Activated B cell treated with CpG ODN at 0.5 μM for 24 hours (primary cell): ENCODE measurements at regions of chr12 and their contacts with region 1.

Region 1: DNA sequence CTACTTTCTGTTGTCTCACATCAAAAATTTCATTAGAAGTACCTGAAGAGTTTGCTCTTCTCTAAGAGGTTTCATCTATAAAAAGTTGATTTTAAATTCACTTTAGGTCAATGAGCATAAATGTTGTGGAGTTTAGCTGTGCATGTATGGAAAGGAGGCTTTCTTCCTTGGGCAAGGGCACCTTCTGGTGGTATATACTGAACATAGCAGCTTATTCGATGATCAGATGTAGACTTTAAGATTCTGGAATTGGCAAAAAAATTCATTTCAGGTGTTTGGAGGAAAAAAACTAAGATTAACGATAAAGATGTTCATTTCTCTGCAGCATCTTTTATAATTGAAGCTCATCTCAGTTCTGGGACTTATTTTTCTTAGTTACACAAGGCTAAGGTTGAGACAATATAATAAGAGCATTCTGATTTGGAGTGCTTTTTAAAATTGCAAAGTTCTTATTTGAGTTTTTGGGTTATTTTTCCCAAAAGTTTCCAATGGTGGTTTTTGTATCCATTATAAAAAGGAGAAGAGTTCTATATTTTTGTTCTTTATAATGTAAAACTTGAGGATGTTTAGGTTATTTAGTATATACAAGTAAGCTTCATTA is 46.8 kb downstream of the TMEM117 start:
- DNase-seq: no peak
- ATAC-seq: peak; percentile 75
- H3K4me3 Mint-ChIP-seq: no peak overlapping the region
- H3K27ac Mint-ChIP-seq: no peak overlapping the region
- H3K4me1 Mint-ChIP-seq: no peaks in the 10 kb centered on the region
- H3K27me3 Mint-ChIP-seq: no peaks in the 10 kb centered on the region
- CTCF ChIP-seq: peak; percentile 78

Region 2: GRCh38 chr12:43131304-43131703 is 751.4 kb before region 1 on chr12:
- CTCF ChIA-PET with region 1: no interaction called
- POLR2A ChIA-PET with region 1: no interaction called
- intact Hi-C with region 1: no loop called
- DNase-seq: no peak
- ATAC-seq: no peak
- H3K4me3 Mint-ChIP-seq: no peak overlapping the region
- H3K27ac Mint-ChIP-seq: no peak overlapping the region
- H3K4me1 Mint-ChIP-seq: no peaks in the 10 kb centered on the region
- H3K27me3 Mint-ChIP-seq: no peaks in the 10 kb centered on the region
- CTCF ChIP-seq: no peak

Region 3: DNA sequence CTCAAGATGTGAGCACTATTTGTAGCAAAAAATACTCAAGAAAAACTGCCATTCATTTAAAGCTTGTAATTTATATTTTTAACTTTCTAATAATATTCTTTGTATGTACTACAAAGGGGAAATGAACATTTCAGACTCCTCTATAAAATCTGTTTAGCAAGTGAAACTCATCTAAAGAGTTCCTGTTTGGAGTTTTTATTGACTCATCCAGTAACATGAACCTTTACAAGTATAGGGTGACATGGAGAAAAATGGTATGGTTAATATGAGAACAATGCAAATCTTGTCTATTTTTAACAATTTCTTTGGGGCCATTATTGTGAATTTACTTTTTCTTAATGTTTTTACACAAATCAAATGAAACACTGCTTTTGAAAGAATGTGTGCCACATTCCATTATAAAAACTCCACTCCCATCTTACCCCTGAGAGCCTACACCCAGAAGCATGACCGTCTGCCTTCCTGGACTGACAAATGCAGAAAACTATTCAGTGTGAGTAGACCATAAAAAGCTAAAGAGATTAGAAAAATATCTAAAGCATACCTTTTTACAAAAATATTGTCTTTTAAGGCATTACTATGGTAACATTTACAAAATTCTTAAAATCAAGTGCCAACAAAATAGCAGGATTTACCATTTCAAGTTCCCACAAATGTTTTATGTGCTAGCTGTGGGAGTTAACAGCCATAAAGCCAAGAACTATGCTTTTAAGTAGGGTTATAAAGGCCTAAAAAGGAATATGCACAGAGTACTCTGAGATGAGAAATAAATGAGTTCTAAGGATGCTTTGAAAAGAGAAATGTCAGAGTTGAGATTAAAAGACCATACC is 474.6 kb before region 1 on chr12:
- CTCF ChIA-PET with region 1: no interaction called
- POLR2A ChIA-PET with region 1: no interaction called
- intact Hi-C with region 1: no loop called
- DNase-seq: no peak
- ATAC-seq: no peak
- H3K4me3 Mint-ChIP-seq: no peak overlapping the region
- H3K27ac Mint-ChIP-seq: no peak overlapping the region
- H3K4me1 Mint-ChIP-seq: no peaks in the 10 kb centered on the region
- H3K27me3 Mint-ChIP-seq: no peaks in the 10 kb centered on the region
- CTCF ChIP-seq: no peak

Region 4: GRCh38 chr12:43444940-43445564 is 437.6 kb before region 1 on chr12:
- CTCF ChIA-PET with region 1: interaction called, 61 read pairs
- POLR2A ChIA-PET with region 1: interaction called, 6 read pairs
- intact Hi-C with region 1: loop called (anchors 1 kb)
- DNase-seq: no peak
- ATAC-seq: peak; percentile 47
- H3K4me3 Mint-ChIP-seq: no peak overlapping the region
- H3K27ac Mint-ChIP-seq: no peak overlapping the region
- H3K4me1 Mint-ChIP-seq: no peaks in the 10 kb centered on the region
- H3K27me3 Mint-ChIP-seq: peaks cover 3% of the 10 kb centered on the region
- CTCF ChIP-seq: no peak

Region 5: GRCh38 chr12:43501703-43502102 is 381.0 kb before region 1 on chr12:
- CTCF ChIA-PET with region 1: no interaction called
- POLR2A ChIA-PET with region 1: no interaction called
- intact Hi-C with region 1: loop called (anchors 5 kb)
- DNase-seq: no peak
- ATAC-seq: no peak
- H3K4me3 Mint-ChIP-seq: no peak overlapping the region
- H3K27ac Mint-ChIP-seq: no peak overlapping the region
- H3K4me1 Mint-ChIP-seq: no peaks in the 10 kb centered on the region
- H3K27me3 Mint-ChIP-seq: no peaks in the 10 kb centered on the region
- CTCF ChIP-seq: no peak

Region 6: DNA sequence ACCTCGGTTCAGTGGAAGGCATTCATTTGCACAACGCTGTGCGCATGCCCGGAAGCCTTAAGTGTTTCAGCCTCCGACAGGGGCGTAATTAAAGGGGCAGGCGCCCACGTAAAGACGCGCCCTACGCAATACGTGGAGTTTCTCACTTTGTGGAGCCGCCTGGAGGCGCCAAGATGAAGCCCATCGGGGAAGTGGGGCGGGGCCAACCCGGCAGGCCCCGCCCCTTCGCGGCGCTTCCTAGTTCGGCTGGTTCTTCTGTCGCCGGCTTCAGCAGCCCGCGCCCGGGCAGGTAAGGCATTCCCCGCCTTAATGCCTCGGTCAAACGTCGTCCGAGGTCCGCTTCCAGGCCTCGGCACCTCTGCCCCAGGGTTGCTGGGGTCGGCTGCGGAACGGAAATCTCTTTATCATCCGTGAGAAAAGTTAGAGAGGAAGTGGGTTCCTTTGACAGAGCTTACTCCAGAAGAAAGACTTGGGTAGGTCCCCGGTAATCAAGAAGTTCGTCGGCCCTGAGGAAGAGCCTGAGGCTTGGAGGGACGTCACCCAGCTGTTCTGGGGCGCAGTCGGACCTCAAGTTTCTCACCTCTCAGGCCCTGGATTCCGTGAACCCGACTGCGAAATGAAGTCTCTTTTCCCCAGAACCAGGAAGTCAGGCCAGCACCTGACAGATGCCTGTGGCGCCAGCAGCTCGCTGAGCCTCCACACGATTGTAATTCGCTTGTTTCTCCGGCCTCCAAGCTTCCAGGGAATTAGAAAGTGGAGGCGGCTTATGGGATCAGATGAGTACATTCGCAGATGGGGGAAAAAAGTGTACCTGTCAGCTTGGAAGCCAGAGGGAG is 123.7 kb before region 1 on chr12 and contains the starts of genes IRAK4 and PUS7L:
- CTCF ChIA-PET with region 1: interaction called, 8 read pairs
- POLR2A ChIA-PET with region 1: interaction called, 5 read pairs
- intact Hi-C with region 1: loop called (anchors 1 kb)
- DNase-seq: peak; percentile 83
- ATAC-seq: peak; percentile 98
- H3K4me3 Mint-ChIP-seq: peak within 1 kb of the TSS; percentile 98
- H3K27ac Mint-ChIP-seq: peak within 1 kb of the TSS; percentile 97
- H3K4me1 Mint-ChIP-seq: peaks cover 68% of the 10 kb centered on the region
- H3K27me3 Mint-ChIP-seq: no peaks in the 10 kb centered on the region
- CTCF ChIP-seq: no peak
- total RNA-seq, gene IRAK4: 38.4 and 40.8 TPM in 2 replicates
- total RNA-seq, gene PUS7L: 16.1 and 19.9 TPM in 2 replicates

Region 7: DNA sequence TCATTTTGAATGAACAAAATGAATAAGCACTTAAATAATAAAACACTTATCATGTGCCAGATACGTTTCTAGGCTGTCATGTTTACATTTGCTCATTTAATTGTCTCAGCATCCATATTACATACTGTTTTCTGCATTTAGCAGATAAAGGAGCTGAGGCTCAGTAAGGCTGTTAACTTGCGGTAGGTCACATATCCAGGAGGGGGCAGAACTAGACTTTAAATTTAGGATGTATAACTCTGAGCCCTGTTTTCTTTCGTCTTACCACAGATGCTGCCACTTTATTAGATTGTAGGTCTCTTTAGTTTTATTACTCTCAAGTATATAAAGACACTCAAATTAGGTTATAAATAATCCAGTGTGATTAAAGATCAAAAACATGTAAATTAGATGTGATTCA is 106.2 kb before region 1 on chr12:
- CTCF ChIA-PET with region 1: interaction called, 61 read pairs
- POLR2A ChIA-PET with region 1: no interaction called
- intact Hi-C with region 1: loop called (anchors 1 kb)
- DNase-seq: no peak
- ATAC-seq: peak; percentile 37
- H3K4me3 Mint-ChIP-seq: no peak overlapping the region
- H3K27ac Mint-ChIP-seq: no peak overlapping the region
- H3K4me1 Mint-ChIP-seq: no peaks in the 10 kb centered on the region
- H3K27me3 Mint-ChIP-seq: no peaks in the 10 kb centered on the region
- CTCF ChIP-seq: no peak

Region 8: GRCh38 chr12:43805860-43806736 is 76.6 kb before region 1 on chr12 and contains the start of gene TWF1:
- CTCF ChIA-PET with region 1: interaction called, 6 read pairs
- POLR2A ChIA-PET with region 1: no interaction called
- intact Hi-C with region 1: loop called (anchors 1 kb)
- DNase-seq: peak; percentile 94
- ATAC-seq: peak; percentile 92
- H3K4me3 Mint-ChIP-seq: peak within 1 kb of the TSS; percentile 100
- H3K27ac Mint-ChIP-seq: peak within 1 kb of the TSS; percentile 100
- H3K4me1 Mint-ChIP-seq: peaks cover 31% of the 10 kb centered on the region
- H3K27me3 Mint-ChIP-seq: no peaks in the 10 kb centered on the region
- CTCF ChIP-seq: no peak
- total RNA-seq, gene TWF1: 26.8 and 28.2 TPM in 2 replicates

Region 9: GRCh38 chr12:43835656-43836474 is 46.8 kb before region 1 on chr12 and contains the start of gene TMEM117:
- CTCF ChIA-PET with region 1: interaction called, 4 read pairs
- POLR2A ChIA-PET with region 1: no interaction called
- intact Hi-C with region 1: loop called (anchors 5 kb)
- DNase-seq: peak; percentile 72
- ATAC-seq: peak; percentile 77
- H3K4me3 Mint-ChIP-seq: peak within 1 kb of the TSS; percentile 86
- H3K27ac Mint-ChIP-seq: peak within 1 kb of the TSS; percentile 84
- H3K4me1 Mint-ChIP-seq: peaks cover 17% of the 10 kb centered on the region
- H3K27me3 Mint-ChIP-seq: no peaks in the 10 kb centered on the region
- CTCF ChIP-seq: no peak
- total RNA-seq, gene TMEM117: 3.5 and 4.8 TPM in 2 replicates